CD4-positive, alpha-beta memory T cell (primary cell): ENCODE measurements at regions of chr11 and their contacts with region 1.

Region 1: GRCh38 chr11:8911029-8911826 is at the start of gene AKIP1:
- DNase-seq: peak; percentile 63 to 78 (median 65)
- H3K4me3 ChIP-seq: peak within 1 kb of the TSS; percentile 76 to 79
- H3K4me3 Mint-ChIP-seq: peak within 1 kb of the TSS; percentile 91 to 97 (median 92)
- H3K27ac ChIP-seq: peak within 1 kb of the TSS; percentile 52
- H3K27ac Mint-ChIP-seq: peak within 1 kb of the TSS; percentile 57 to 94 (median 89)
- H3K4me1 ChIP-seq: peaks cover 38% of the 10 kb centered on the region
- H3K4me1 Mint-ChIP-seq: peaks cover 27 to 60% (median 41%) of the 10 kb centered on the region in 4 donors
- H3K27me3 ChIP-seq: no peaks in the 10 kb centered on the region
- H3K27me3 Mint-ChIP-seq: no peaks in the 10 kb centered on the region
- total RNA-seq, gene AKIP1: 13.3 to 14.5 TPM

Region 2: GRCh38 chr11:7986768-7987559 is 924.3 kb before region 1 on chr11 and contains the start of gene EIF3F:
- CTCF ChIA-PET with region 1: no interaction called
- POLR2A ChIA-PET with region 1: no interaction called
- intact Hi-C with region 1: loop called (anchors 2 kb)
- DNase-seq: peak; percentile 93 to 98 (median 96)
- H3K4me3 ChIP-seq: peak within 1 kb of the TSS; percentile 63 to 77
- H3K4me3 Mint-ChIP-seq: peak within 1 kb of the TSS; percentile 89 to 97 (median 95)
- H3K27ac ChIP-seq: peak within 1 kb of the TSS; percentile 77
- H3K27ac Mint-ChIP-seq: peak within 1 kb of the TSS; percentile 89 to 99 (median 98)
- H3K4me1 ChIP-seq: peaks cover 36% of the 10 kb centered on the region
- H3K4me1 Mint-ChIP-seq: peaks cover 29 to 59% (median 46%) of the 10 kb centered on the region in 4 donors
- H3K27me3 ChIP-seq: no peaks in the 10 kb centered on the region
- H3K27me3 Mint-ChIP-seq: no peaks in the 10 kb centered on the region
- total RNA-seq, gene EIF3F: 317 to 330 TPM

Region 3: DNA sequence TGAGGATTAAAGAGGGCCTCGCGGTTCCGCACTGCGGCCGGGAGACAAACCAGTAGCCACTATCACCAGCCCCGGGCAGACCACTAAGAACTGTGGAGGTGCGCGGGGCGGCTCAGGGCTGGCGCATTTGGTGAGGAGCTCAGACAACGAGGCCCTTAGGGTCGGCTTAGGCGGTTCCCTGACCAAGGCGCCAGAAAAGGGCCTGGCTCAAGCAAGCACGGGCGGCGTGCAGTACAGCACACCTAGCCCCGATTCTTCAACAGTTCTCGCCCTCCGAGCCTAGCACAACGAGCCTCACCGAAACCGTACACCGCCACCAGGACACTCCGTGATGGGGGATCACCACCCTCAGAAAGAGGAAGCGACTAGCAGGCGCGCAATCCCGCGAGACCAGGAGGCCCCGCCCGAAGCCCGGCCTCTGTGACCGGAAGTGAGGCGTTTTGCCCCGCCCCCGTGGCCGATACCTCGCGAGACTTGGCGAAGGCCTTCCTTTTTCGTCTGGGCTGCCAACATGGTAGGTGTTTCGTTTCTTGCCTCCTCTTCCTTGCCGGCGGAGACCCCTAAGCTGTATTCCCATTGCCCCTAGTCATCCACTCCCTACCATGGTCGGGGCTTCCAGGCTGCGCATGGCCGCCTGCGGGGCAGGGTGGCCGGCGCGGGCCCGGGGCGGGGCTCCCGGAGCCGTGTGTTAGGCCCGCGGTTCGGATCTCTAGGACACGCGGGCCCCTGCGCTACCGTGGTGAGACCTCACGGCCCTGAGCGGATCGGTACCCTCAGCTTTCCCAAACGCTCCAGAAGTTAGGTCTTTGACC is 228.7 kb before region 1 on chr11 and contains the starts of genes RPL27A and TRIM66:
- CTCF ChIA-PET with region 1: no interaction called
- POLR2A ChIA-PET with region 1: interaction called, 7 read pairs
- intact Hi-C with region 1: loop called (anchors 2 kb)
- DNase-seq: peak; percentile 98 to 99 (median 98)
- H3K4me3 ChIP-seq: peak within 1 kb of the TSS; percentile 61 to 87
- H3K4me3 Mint-ChIP-seq: peak within 1 kb of the TSS; percentile 89 to 99 (median 96)
- H3K27ac ChIP-seq: peak within 1 kb of the TSS; percentile 96
- H3K27ac Mint-ChIP-seq: peak within 1 kb of the TSS; percentile 97 to 99 (median 98)
- H3K4me1 ChIP-seq: peaks cover 34% of the 10 kb centered on the region
- H3K4me1 Mint-ChIP-seq: peaks cover 28 to 72% (median 40%) of the 10 kb centered on the region in 4 donors
- H3K27me3 ChIP-seq: no peaks in the 10 kb centered on the region
- H3K27me3 Mint-ChIP-seq: no peaks in the 10 kb centered on the region
- total RNA-seq, gene RPL27A: 1,456 to 1,504 TPM
- total RNA-seq, gene TRIM66: 25.0 to 31.3 TPM

Region 4: DNA sequence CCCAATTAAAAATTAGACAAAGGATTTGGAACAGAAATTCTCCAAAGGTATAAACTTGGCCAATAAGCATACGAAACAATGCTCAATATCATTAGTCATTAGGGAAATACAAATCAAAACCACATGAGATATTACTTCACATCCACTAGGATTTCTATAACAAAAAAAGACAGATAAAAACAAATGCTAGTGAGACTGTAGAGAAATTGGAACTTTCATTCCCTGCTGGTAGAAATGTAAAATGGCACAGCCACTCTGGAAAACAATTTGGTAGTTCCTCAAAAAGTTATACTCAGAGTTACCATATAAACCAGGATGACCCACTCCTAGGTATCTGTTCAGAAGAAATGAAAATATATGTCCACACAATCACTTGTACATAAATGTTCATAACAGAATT is 157.0 kb before region 1 on chr11:
- CTCF ChIA-PET with region 1: no interaction called
- POLR2A ChIA-PET with region 1: no interaction called
- intact Hi-C with region 1: no loop called
- DNase-seq: no peak
- H3K4me3 ChIP-seq: no peak overlapping the region
- H3K4me3 Mint-ChIP-seq: no peak overlapping the region
- H3K27ac ChIP-seq: no peak overlapping the region
- H3K27ac Mint-ChIP-seq: no peak overlapping the region
- H3K4me1 ChIP-seq: no peaks in the 10 kb centered on the region
- H3K4me1 Mint-ChIP-seq: no peaks in the 10 kb centered on the region
- H3K27me3 ChIP-seq: peaks cover 5% of the 10 kb centered on the region
- H3K27me3 Mint-ChIP-seq: peaks cover 1 to 9% of the 10 kb centered on the region in 2 donors

Region 5: GRCh38 chr11:8810540-8811301 is 100.5 kb before region 1 on chr11:
- CTCF ChIA-PET with region 1: no interaction called
- POLR2A ChIA-PET with region 1: no interaction called
- intact Hi-C with region 1: no loop called
- DNase-seq: no peak
- H3K4me3 ChIP-seq: no peak overlapping the region
- H3K4me3 Mint-ChIP-seq: peak overlapping the region; percentile 3 to 36 (median 20)
- H3K27ac ChIP-seq: no peak overlapping the region
- H3K27ac Mint-ChIP-seq: no peak overlapping the region
- H3K4me1 ChIP-seq: peaks cover 7% of the 10 kb centered on the region
- H3K4me1 Mint-ChIP-seq: peaks cover 3 to 10% (median 6%) of the 10 kb centered on the region in 4 donors
- H3K27me3 ChIP-seq: no peaks in the 10 kb centered on the region
- H3K27me3 Mint-ChIP-seq: peaks cover 12 to 15% of the 10 kb centered on the region in 2 donors

Region 6: GRCh38 chr11:8964324-8965320 is 53.4 kb after region 1 on chr11 and contains the start of gene TMEM9B:
- CTCF ChIA-PET with region 1: interaction called, 56 read pairs
- POLR2A ChIA-PET with region 1: interaction called, 19 read pairs
- intact Hi-C with region 1: loop called (anchors 1 kb)
- DNase-seq: peak; percentile 72 to 83 (median 76)
- H3K4me3 ChIP-seq: peak within 1 kb of the TSS; percentile 89 to 91
- H3K4me3 Mint-ChIP-seq: peak within 1 kb of the TSS; percentile 93 to 98 (median 97)
- H3K27ac ChIP-seq: peak within 1 kb of the TSS; percentile 90
- H3K27ac Mint-ChIP-seq: peak within 1 kb of the TSS; percentile 91 to 99 (median 98)
- H3K4me1 ChIP-seq: peaks cover 26% of the 10 kb centered on the region
- H3K4me1 Mint-ChIP-seq: peaks cover 20 to 41% (median 30%) of the 10 kb centered on the region in 4 donors
- H3K27me3 ChIP-seq: no peaks in the 10 kb centered on the region
- H3K27me3 Mint-ChIP-seq: no peaks in the 10 kb centered on the region
- total RNA-seq, gene TMEM9B: 36.8 to 38.9 TPM

Region 7: GRCh38 chr11:9003573-9004309 is 92.5 kb after region 1 on chr11 and contains the start of gene NRIP3:
- CTCF ChIA-PET with region 1: no interaction called
- POLR2A ChIA-PET with region 1: interaction called, 3 read pairs
- intact Hi-C with region 1: loop called (anchors 5 kb)
- DNase-seq: peak; percentile 79 to 88 (median 82)
- H3K4me3 ChIP-seq: peak within 1 kb of the TSS; percentile 30 to 41
- H3K4me3 Mint-ChIP-seq: peak within 1 kb of the TSS; percentile 79 to 91 (median 86)
- H3K27ac ChIP-seq: no peak within 1 kb of the TSS
- H3K27ac Mint-ChIP-seq: peak within 1 kb of the TSS; percentile 57 to 87 (median 79)
- H3K4me1 ChIP-seq: peaks cover 16% of the 10 kb centered on the region
- H3K4me1 Mint-ChIP-seq: peaks cover 12 to 28% (median 18%) of the 10 kb centered on the region in 4 donors
- H3K27me3 ChIP-seq: peaks cover 19% of the 10 kb centered on the region
- H3K27me3 Mint-ChIP-seq: peaks cover 11 to 22% of the 10 kb centered on the region in 2 donors
- total RNA-seq, gene NRIP3: 1.5 to 1.7 TPM

Region 8: DNA sequence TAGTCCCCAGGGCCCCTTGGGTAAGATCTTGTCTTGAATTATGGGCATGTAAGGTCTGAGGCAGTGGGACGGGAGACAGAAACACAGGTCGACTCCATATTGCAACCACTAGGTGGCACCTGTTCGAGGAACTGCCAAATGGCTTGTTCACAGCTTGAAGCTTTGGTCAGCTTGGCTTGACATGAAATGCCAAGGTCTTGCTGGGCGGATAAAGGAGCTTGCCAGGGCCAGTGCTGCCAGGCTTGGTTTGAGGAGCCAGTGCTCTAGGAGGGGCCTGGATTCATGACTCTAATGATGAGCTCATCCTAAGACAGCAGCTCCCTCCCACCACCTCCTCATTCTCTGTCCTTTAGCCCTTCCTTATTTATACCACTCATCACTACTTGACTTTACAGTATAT is 104.4 kb after region 1 on chr11:
- CTCF ChIA-PET with region 1: interaction called, 6 read pairs
- POLR2A ChIA-PET with region 1: no interaction called
- intact Hi-C with region 1: loop called (anchors 5 kb)
- DNase-seq: peak; percentile 51 to 59 (median 55)
- H3K4me3 ChIP-seq: no peak overlapping the region
- H3K4me3 Mint-ChIP-seq: no peak overlapping the region
- H3K27ac ChIP-seq: no peak overlapping the region
- H3K27ac Mint-ChIP-seq: no peak overlapping the region
- H3K4me1 ChIP-seq: peaks cover 20% of the 10 kb centered on the region
- H3K4me1 Mint-ChIP-seq: peaks cover 18 to 37% (median 25%) of the 10 kb centered on the region in 4 donors
- H3K27me3 ChIP-seq: no peaks in the 10 kb centered on the region
- H3K27me3 Mint-ChIP-seq: peaks cover 0 to 2% of the 10 kb centered on the region in 2 donors

Region 9: GRCh38 chr11:9573052-9573774 is 662.0 kb after region 1 on chr11 and contains the start of gene WEE1:
- CTCF ChIA-PET with region 1: no interaction called
- POLR2A ChIA-PET with region 1: interaction called, 3 read pairs
- intact Hi-C with region 1: loop called (anchors 5 kb)
- DNase-seq: peak; percentile 94 to 96 (median 95)
- H3K4me3 ChIP-seq: peak within 1 kb of the TSS; percentile 42 to 80
- H3K4me3 Mint-ChIP-seq: peak within 1 kb of the TSS; percentile 85 to 93 (median 89)
- H3K27ac ChIP-seq: peak within 1 kb of the TSS; percentile 86
- H3K27ac Mint-ChIP-seq: peak within 1 kb of the TSS; percentile 85 to 95 (median 92)
- H3K4me1 ChIP-seq: peaks cover 55% of the 10 kb centered on the region
- H3K4me1 Mint-ChIP-seq: peaks cover 24 to 56% (median 39%) of the 10 kb centered on the region in 4 donors
- H3K27me3 ChIP-seq: no peaks in the 10 kb centered on the region
- H3K27me3 Mint-ChIP-seq: no peaks in the 10 kb centered on the region
- total RNA-seq, gene WEE1: 11.1 to 11.7 TPM